Mucosa of descending colon (tissue), 3 donors: ENCODE measurements at regions of chr11 and their contacts with region 1.

Region 1: GRCh38 chr11:106076919-106077608 is at the start of gene KBTBD3:
- DNase-seq: peak; percentile 98 to 99 (median 99)
- ATAC-seq: peak; percentile 96
- H3K4me3 ChIP-seq: peak within 1 kb of the TSS; percentile 71
- H3K4me1 ChIP-seq: peaks cover 27% of the 10 kb centered on the region
- CTCF ChIP-seq: peak; percentile 18
- total RNA-seq, gene KBTBD3: 5.2 to 13.5 (median 8.8) TPM

Region 2: DNA sequence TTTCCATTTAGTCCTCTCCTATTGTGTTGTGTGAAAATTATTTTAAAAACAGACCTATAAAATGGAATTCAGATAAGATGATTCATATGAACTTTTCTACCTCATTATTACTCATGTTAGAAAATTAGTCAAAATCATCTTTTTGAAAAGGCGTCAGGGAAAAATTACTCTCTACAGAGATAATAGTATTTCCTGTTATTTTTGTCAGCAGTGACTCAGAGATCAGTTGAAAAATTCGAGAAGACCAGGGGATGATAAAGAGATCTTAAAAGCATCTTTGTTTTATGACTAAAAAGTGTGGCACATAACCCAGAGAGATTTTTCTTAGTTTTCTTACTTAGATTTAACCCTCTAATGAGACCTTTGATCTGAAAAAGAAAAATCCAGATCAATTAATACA is 779.6 kb before region 1 on chr11:
- intact Hi-C with region 1: no loop called
- DNase-seq: no peak
- ATAC-seq: no peak
- H3K4me3 ChIP-seq: no peak overlapping the region
- H3K4me1 ChIP-seq: no peaks in the 10 kb centered on the region
- CTCF ChIP-seq: no peak

Region 3: DNA sequence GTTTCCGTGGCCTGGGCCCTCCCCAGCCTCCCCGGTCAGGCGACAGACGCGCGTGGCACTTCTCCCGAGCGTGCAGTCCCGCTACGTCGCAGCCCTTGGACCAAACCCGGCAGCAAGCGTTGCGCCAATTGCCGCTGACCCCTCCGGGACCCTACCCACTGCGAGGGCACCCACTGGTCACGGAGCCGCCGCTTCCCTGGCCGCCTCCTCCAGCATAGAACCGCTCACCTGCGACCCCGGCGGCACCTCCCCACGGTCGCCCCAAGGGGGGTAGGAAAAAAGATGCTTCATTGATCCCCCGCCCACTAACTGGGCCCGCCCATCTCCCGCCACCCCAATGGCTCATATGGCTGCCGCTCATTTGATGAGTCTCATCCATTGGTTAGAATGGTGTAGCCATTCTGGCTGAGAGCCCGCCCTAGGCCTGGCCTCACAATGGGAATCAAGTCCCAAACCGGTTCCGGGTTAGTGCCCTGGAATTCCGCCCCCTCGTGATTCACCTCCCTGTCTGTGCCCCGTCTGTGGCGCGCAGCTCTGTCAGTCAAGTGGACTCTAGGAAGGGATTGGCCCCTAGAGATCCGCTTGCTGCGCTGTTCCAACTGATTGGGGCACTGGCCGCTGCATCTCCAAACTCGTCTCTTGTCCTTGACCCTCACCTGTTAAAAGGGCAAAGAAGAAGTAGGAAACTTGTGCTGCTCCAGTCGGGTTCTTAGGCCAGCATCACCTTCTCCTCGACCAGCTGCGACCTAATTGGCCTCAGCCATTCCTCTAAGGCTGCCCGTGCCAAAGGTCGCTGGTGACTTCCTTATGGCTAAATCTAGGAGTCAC is 54.9 kb before region 1 on chr11 and contains the start of gene MSANTD4:
- intact Hi-C with region 1: loop called in 1 of 2 experiments (anchors 10 kb)
- DNase-seq: peak; percentile 98 to 99 (median 99)
- ATAC-seq: peak; percentile 99
- H3K4me3 ChIP-seq: peak within 1 kb of the TSS; percentile 60
- H3K4me1 ChIP-seq: peaks cover 3% of the 10 kb centered on the region
- CTCF ChIP-seq: no peak
- total RNA-seq, gene MSANTD4: 6.2 to 21.3 (median 7.8) TPM